Ascending aorta (tissue), 2 donors: ENCODE measurements at regions of chr16 and their contacts with region 1.

Region 1: DNA sequence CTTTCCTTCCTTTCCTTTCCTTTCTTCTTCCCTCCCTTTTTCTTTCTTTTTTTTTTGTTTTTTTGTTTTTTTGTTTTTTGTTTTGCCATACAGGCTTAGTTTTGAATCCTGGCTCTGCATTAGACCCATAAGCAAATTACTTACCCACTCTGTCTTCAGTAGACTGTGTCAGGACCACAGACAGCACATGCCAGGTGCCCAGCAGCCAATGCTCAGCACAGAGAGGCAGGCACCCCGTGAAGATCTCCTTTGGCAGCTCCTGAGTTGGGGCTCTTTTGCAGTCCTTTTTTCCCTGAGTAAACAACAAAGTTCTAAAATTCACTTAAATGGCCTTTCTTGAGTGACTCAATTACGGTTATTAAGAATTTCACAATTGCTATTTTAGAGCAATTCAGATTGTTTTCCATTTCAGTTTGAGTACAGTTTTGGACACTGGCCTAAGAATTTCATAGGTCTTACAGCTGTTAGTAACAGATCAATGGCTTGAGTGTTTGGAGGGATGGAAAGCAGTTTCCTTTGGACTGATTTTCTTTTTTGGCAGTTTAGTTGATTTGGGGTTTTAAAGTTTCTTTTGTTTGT is 26.2 kb upstream of the SLC5A11 start:
- DNase-seq: no peak
- H3K4me3 ChIP-seq: no peak overlapping the region
- H3K27ac ChIP-seq: peak overlapping the region; percentile 20 to 21
- H3K4me1 ChIP-seq: no peaks in the 10 kb centered on the region
- H3K27me3 ChIP-seq: no peaks in the 10 kb centered on the region
- CTCF ChIP-seq: no peak

Region 2: DNA sequence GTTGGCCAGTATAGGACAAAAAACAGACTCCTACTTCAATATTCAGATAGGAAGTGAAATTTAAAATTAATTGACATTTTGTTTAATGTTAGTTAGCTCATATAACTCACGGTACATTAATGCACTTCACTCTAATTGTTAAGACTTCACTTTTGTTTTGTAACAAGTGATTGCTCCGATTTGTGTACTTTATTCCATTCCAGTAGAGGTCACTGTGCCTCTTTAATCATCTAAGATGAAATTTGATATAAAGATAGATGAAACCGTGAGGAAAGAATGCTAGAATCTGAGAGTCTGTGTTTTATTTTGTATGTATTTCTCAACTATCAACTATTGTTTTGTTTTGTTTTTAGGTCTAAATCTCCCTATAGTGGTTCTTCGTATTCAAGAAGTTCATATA is 251.2 kb before region 1 on chr16:
- intact Hi-C with region 1: loop called (anchors 5 kb)
- DNase-seq: no peak
- H3K4me3 ChIP-seq: no peak overlapping the region
- H3K27ac ChIP-seq: no peak overlapping the region
- H3K4me1 ChIP-seq: no peaks in the 10 kb centered on the region
- H3K27me3 ChIP-seq: no peaks in the 10 kb centered on the region
- CTCF ChIP-seq: peak in 1 of 3 experiments; percentile 32